Spleen (tissue), 13 donors: ENCODE measurements at regions of chr5 and their contacts with region 1.

Region 1: DNA sequence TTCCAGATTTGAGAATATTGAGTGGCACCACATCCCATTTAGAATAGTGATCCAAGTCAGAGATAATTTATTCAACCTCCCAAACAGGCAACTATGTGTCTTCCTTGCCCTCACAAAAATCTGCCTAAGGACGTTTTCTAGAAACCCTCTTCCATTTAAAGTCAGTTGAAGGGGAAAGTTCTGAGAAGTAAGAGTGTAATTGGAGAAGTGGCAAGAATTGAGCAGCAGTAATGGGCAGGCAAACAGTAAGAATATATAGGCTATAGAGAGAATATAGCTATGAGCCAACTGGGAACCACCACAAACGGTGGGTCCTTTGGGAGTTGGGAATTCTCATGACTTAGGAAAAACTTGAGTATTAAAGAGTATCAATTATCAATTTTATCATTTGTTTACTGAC is 31.1 kb upstream of the CETN3 start:
- DNase-seq: no peak
- H3K4me3 ChIP-seq: no peak overlapping the region
- H3K27ac ChIP-seq: no peak overlapping the region
- H3K4me1 ChIP-seq: peaks cover 0 to 16% (median 2%) of the 10 kb centered on the region in 6 donors
- H3K27me3 ChIP-seq: peaks cover 0 to 16% (median 0%) of the 10 kb centered on the region in 7 donors
- CTCF ChIP-seq: no peak
- POLR2A ChIP-seq: no peak

Region 2: DNA sequence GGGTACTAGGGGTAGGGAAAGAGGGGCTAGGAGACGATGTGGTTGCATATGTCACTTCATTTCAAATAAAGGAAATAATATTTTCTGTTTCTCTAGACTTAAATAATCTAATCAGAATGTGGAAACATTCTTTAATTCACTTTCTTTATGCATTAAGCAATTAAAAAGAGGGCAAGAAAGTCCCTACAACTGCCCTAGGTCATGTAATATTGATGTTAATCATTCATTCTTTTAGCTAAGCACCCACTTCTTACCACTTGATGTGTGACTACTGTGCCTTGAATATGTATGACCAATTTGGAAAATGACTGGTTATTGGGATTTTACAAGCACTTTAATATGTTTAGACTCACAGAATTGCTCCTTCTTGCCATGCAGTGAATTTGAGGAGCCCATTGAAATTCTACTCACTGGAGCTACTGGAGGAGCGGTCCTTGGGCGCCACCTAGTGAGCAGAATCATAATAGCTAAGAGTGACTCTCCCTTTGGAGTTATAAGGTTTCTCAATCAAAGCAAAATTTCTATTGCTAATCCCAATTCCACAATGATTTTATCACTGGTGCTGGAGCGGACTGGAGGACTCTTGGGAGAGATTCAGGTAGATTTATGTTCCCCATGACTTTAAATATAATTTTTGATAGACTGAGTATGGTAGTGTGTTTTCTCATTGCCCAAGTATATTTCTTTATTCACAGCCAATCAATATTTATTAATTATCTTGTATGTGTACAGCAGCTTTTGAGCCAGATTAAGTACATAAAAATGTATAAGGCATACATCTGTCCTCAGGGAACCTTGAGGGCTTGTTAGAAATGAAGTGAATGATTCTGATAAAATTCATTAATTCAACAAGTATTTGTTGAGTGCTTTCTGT is 343.1 kb after region 1 on chr5:
- intact Hi-C with region 1: loop called (anchors 5 kb)
- DNase-seq: peak; percentile 68
- H3K4me3 ChIP-seq: no peak overlapping the region
- H3K27ac ChIP-seq: no peak overlapping the region
- H3K4me1 ChIP-seq: no peaks in the 10 kb centered on the region
- H3K27me3 ChIP-seq: peaks cover 0 to 9% (median 0%) of the 10 kb centered on the region in 7 donors
- CTCF ChIP-seq: peak; percentile 5 to 81 (median 69)
- POLR2A ChIP-seq: no peak

Region 3: DNA sequence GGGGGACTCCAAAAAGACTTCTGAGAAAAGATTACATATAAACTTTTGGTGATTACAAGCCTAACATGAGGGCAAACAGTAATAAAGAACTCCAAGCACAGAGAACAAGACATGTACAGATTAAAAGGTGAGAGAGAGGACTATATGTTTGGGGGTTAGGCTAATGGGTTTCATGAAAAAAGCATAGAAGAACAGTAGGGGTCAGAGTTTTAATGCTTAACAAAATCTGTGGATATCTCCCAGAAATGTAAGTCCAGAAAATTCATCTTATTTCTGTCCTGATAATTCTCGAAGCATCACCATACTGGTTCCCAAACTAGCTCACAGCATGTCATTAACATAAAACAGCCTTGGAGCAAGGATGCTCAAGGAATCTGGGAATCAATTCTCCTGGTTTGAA is 805.2 kb after region 1 on chr5:
- intact Hi-C with region 1: no loop called
- DNase-seq: no peak
- H3K4me3 ChIP-seq: no peak overlapping the region
- H3K27ac ChIP-seq: no peak overlapping the region
- H3K4me1 ChIP-seq: no peaks in the 10 kb centered on the region
- H3K27me3 ChIP-seq: no peaks in the 10 kb centered on the region
- CTCF ChIP-seq: no peak
- POLR2A ChIP-seq: no peak